B cell (primary cell): ENCODE measurements at regions of chr2 and their contacts with region 1.

Region 1: DNA sequence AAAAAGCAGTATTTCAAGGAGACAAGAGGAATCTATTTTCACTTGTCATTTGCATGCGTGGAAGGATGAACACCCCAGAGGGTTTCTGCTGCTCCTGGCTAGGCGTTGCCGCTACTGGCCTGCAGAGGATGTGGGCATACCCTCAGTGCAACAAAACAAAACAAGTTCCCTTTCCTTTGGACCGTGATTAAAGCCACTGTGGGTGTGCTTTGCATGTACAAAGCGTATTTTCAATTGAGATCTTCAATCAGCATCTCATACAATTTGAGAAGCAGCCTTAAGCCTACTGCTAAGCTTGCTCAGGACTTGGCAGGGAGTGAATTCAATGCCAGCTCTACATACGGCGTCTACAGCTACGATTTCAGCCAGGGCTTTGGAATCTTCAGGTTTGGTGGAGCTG is 298.4 kb downstream of the LPIN1 start:
- DNase-seq: peak; percentile 78
- ATAC-seq: peak; percentile 96
- H3K4me3 ChIP-seq: peak overlapping the region in 3 of 5 experiments; percentile 27 to 61 (median 43)
- H3K4me3 Mint-ChIP-seq: peak overlapping the region; percentile 26
- H3K27ac ChIP-seq: peak overlapping the region; percentile 76 to 79
- H3K27ac Mint-ChIP-seq: peak overlapping the region; percentile 70
- H3K4me1 ChIP-seq: peaks cover 85 to 86% of the 10 kb centered on the region in 2 donors
- H3K4me1 Mint-ChIP-seq: peaks cover 88% of the 10 kb centered on the region
- H3K27me3 ChIP-seq: no peaks in the 10 kb centered on the region
- H3K27me3 Mint-ChIP-seq: no peaks in the 10 kb centered on the region
- CTCF ChIP-seq: no peak

Region 2: DNA sequence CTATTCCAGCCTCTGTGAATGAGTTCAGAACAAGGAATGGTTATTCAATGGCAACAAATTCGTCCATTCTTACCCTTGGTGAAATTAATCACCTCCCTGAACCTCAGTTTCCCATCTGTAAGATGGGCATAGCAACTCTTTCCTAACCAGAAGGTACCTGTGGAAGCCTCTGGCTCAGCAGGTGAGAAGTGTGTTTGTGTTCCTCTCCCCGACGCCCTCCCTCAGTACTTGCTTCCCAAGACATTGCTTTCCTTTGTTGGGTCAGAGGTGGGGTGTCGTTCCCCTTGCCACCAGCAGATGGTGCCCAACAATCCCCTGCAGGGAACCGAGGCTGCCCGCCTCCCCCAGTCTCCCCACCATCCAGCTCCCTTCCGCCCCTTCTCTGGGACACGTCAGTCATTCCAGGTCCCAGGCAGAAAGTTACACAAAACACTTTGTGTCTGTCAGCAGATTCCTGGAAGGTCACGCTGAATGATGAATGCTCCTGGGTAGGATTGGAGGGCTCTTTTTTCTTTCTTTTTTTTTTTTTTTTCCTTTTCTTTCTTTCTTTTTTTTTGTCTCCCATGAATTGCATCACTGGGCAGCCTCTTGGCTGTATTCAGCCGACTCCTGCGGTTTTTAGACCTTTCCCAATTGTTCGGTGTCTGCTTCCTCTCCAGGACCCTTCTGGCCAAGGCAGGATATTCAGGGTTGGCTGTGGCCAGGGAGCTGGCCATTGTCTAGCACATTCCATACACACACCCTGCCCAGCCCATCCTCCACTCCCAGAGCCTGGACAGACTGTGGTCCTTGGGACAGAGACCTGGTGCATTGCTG is 181.1 kb before region 1 on chr2:
- CTCF ChIA-PET with region 1: interaction called, 5 read pairs
- POLR2A ChIA-PET with region 1: no interaction called
- intact Hi-C with region 1: loop called (anchors 5 kb)
- DNase-seq: peak; percentile 80
- ATAC-seq: peak; percentile 73
- H3K4me3 ChIP-seq: peak overlapping the region in 3 of 5 experiments; percentile 5 to 29 (median 26)
- H3K4me3 Mint-ChIP-seq: peak overlapping the region; percentile 73
- H3K27ac ChIP-seq: no peak overlapping the region
- H3K27ac Mint-ChIP-seq: peak overlapping the region; percentile 59
- H3K4me1 ChIP-seq: peaks cover 70 to 81% of the 10 kb centered on the region in 2 donors
- H3K4me1 Mint-ChIP-seq: peaks cover 87% of the 10 kb centered on the region
- H3K27me3 ChIP-seq: no peaks in the 10 kb centered on the region
- H3K27me3 Mint-ChIP-seq: no peaks in the 10 kb centered on the region
- CTCF ChIP-seq: peak; percentile 96

Region 3: GRCh38 chr2:12032398-12032797 is 12.5 kb before region 1 on chr2:
- CTCF ChIA-PET with region 1: interaction called, 26 read pairs
- POLR2A ChIA-PET with region 1: interaction called, 25 read pairs
- intact Hi-C with region 1: loop called (anchors 1 kb)
- DNase-seq: peak; percentile 86
- ATAC-seq: peak; percentile 77
- H3K4me3 ChIP-seq: peak overlapping the region in 2 of 5 experiments; percentile 7 to 39
- H3K4me3 Mint-ChIP-seq: peak overlapping the region; percentile 83
- H3K27ac ChIP-seq: peak overlapping the region; percentile 66 to 81
- H3K27ac Mint-ChIP-seq: peak overlapping the region; percentile 92
- H3K4me1 ChIP-seq: peaks cover 61 to 64% of the 10 kb centered on the region in 2 donors
- H3K4me1 Mint-ChIP-seq: peaks cover 66% of the 10 kb centered on the region
- H3K27me3 ChIP-seq: no peaks in the 10 kb centered on the region
- H3K27me3 Mint-ChIP-seq: no peaks in the 10 kb centered on the region
- CTCF ChIP-seq: peak; percentile 39

Region 4: GRCh38 chr2:12057436-12058166 is 12.7 kb after region 1 on chr2:
- CTCF ChIA-PET with region 1: interaction called, 3 read pairs
- POLR2A ChIA-PET with region 1: interaction called, 6 read pairs
- intact Hi-C with region 1: loop called (anchors 1 kb)
- DNase-seq: peak; percentile 68
- ATAC-seq: peak; percentile 86
- H3K4me3 ChIP-seq: peak overlapping the region in 2 of 5 experiments; percentile 2 to 44
- H3K4me3 Mint-ChIP-seq: peak overlapping the region; percentile 65
- H3K27ac ChIP-seq: peak overlapping the region in 1 of 2 donors; percentile 11
- H3K27ac Mint-ChIP-seq: peak overlapping the region; percentile 78
- H3K4me1 ChIP-seq: peaks cover 51 to 55% of the 10 kb centered on the region in 2 donors
- H3K4me1 Mint-ChIP-seq: peaks cover 63% of the 10 kb centered on the region
- H3K27me3 ChIP-seq: no peaks in the 10 kb centered on the region
- H3K27me3 Mint-ChIP-seq: no peaks in the 10 kb centered on the region
- CTCF ChIP-seq: no peak

Region 5: DNA sequence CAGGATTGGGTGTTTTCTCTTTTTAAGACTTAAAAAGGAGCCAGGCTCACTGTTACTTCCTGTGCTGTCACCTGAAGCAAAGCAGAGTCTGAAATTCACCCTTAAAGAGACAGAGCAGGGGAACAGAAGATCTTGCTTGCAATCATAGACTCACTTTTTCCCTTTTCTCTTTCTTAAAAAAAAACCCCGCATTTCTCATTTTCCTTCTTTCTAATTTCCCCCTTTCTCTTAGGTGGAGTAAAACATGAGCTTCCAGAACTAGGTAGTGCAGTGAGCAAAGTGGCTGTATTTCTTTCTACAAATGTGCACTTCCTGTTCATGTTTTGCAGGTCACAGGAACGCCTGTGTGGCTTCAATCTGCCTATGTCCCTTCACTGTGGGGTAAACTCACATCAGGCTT is 82.8 kb after region 1 on chr2:
- CTCF ChIA-PET with region 1: no interaction called
- POLR2A ChIA-PET with region 1: interaction called, 5 read pairs
- intact Hi-C with region 1: loop called (anchors 5 kb)
- DNase-seq: peak; percentile 38
- ATAC-seq: peak; percentile 66
- H3K4me3 ChIP-seq: peak overlapping the region in 3 of 5 experiments; percentile 21 to 34 (median 23)
- H3K4me3 Mint-ChIP-seq: peak overlapping the region; percentile 58
- H3K27ac ChIP-seq: peak overlapping the region in 1 of 2 donors; percentile 83
- H3K27ac Mint-ChIP-seq: peak overlapping the region; percentile 55
- H3K4me1 ChIP-seq: peaks cover 54 to 59% of the 10 kb centered on the region in 2 donors
- H3K4me1 Mint-ChIP-seq: peaks cover 8% of the 10 kb centered on the region
- H3K27me3 ChIP-seq: no peaks in the 10 kb centered on the region
- H3K27me3 Mint-ChIP-seq: no peaks in the 10 kb centered on the region
- CTCF ChIP-seq: no peak

Region 6: DNA sequence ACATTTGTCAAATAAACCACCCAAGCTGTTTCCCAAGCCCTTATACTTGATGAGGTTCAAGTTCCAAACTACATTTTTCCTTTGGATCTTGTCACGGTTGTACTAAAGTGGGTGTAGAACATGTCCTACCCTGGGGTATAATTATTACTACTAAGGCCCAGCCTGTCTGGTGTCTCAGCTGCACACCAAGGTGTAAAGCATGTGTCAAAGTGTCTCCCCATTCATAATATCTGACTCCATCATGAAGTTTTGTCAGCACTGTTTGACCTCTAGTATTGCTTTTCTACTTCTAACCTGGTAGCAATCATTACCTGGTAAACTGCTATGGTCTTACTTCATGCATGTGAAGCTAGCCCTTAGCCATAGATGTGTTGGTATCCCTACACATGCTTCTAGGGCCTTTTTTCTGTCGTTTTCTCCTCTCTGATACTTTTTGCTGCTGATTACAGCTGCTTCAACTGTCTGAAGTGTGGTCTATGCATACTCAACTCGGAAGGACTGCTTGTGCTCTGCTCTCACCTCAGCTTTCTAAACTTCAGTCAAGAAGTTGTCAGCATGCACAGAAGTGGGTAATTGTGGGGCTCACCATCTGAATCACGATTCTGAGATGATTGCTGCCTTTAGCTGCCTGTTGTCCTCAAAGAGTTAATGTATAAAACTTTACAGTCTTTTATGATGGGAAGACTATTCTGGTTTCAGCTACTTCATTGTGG is 226.2 kb after region 1 on chr2:
- CTCF ChIA-PET with region 1: no interaction called
- POLR2A ChIA-PET with region 1: no interaction called
- intact Hi-C with region 1: loop called (anchors 10 kb)
- DNase-seq: peak; percentile 23
- ATAC-seq: no peak
- H3K4me3 ChIP-seq: peak overlapping the region in 3 of 5 experiments; percentile 22 to 50 (median 23)
- H3K4me3 Mint-ChIP-seq: peak overlapping the region; percentile 67
- H3K27ac ChIP-seq: peak overlapping the region; percentile 2 to 25
- H3K27ac Mint-ChIP-seq: peak overlapping the region; percentile 27
- H3K4me1 ChIP-seq: peaks cover 11% of the 10 kb centered on the region in 2 donors
- H3K4me1 Mint-ChIP-seq: peaks cover 27% of the 10 kb centered on the region
- H3K27me3 ChIP-seq: no peaks in the 10 kb centered on the region
- H3K27me3 Mint-ChIP-seq: no peaks in the 10 kb centered on the region
- CTCF ChIP-seq: no peak

Region 7: GRCh38 chr2:12587729-12588522 is 543.1 kb after region 1 on chr2:
- CTCF ChIA-PET with region 1: no interaction called
- POLR2A ChIA-PET with region 1: no interaction called
- intact Hi-C with region 1: loop called (anchors 10 kb)
- DNase-seq: peak; percentile 86
- ATAC-seq: peak; percentile 94
- H3K4me3 ChIP-seq: peak overlapping the region in 1 of 5 experiments; percentile 34
- H3K4me3 Mint-ChIP-seq: peak overlapping the region; percentile 46
- H3K27ac ChIP-seq: no peak overlapping the region
- H3K27ac Mint-ChIP-seq: peak overlapping the region; percentile 75
- H3K4me1 ChIP-seq: peaks cover 39 to 41% of the 10 kb centered on the region in 2 donors
- H3K4me1 Mint-ChIP-seq: peaks cover 46% of the 10 kb centered on the region
- H3K27me3 ChIP-seq: no peaks in the 10 kb centered on the region
- H3K27me3 Mint-ChIP-seq: no peaks in the 10 kb centered on the region
- CTCF ChIP-seq: no peak